Mucosa of descending colon (tissue), 3 donors: ENCODE measurements at regions of chr1 and their contacts with region 1.

Region 1: DNA sequence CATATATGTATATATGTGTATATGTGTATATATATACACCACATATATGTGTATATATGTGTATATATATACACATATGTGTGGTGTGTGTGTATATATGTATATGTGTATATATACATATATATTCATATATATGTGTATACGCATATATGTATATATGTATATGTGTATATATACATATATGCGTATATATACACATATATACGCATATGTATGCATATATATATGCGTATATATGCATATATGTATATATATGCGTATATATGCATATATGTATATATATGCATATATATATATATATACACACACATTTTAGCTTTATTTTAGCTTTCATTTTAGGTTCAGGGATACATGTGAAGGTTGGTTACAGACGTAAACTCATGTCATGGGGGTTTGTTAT is 54.8 kb downstream of the PRKACB start:
- DNase-seq: no peak
- ATAC-seq: no peak
- H3K4me3 ChIP-seq: no peak overlapping the region
- H3K4me1 ChIP-seq: no peaks in the 10 kb centered on the region
- CTCF ChIP-seq: no peak

Region 2: GRCh38 chr1:84181350-84182005 is 17.4 kb before region 1 on chr1:
- intact Hi-C with region 1: loop called in 1 of 2 experiments (anchors 2 kb)
- DNase-seq: no peak
- ATAC-seq: no peak
- H3K4me3 ChIP-seq: no peak overlapping the region
- H3K4me1 ChIP-seq: no peaks in the 10 kb centered on the region
- CTCF ChIP-seq: no peak